ENCODE measurements at regions of chr1 and their contacts with region 1.

Region 1: GRCh38 chr1:20143734-20144565 is 4.8 kb downstream of the PLA2G2F start:
- DNase-seq: peak; percentile 19
- ATAC-seq: peak; percentile 36; the same call in 2 of the 3 replicates
- H3K4me3 ChIP-seq: peak overlapping the region in 1 of 3 experiments; percentile 6; a peak in 1 of 6 replicates
- H3K27ac ChIP-seq: no peak overlapping the region
- H3K4me1 ChIP-seq: peaks cover 13% of the 10 kb centered on the region
- H3K27me3 ChIP-seq: peaks cover 4 to 15% of the 10 kb centered on the region in 2 experiments; a peak in 3 of 5 replicates
- CTCF ChIP-seq: no peak
- EP300 ChIP-seq: no peak
- POLR2A ChIP-seq: no peak
- RAD21 ChIP-seq: no peak

Region 2: GRCh38 chr1:20100632-20101355 is 43.2 kb before region 1 on chr1:
- CTCF ChIA-PET with region 1: no interaction called
- POLR2A ChIA-PET with region 1: no interaction called
- in situ Hi-C with region 1: no loop called
- intact Hi-C with region 1: loop called (anchors 2 kb)
- DNase-seq: peak; percentile 48
- ATAC-seq: peak; percentile 94
- H3K4me3 ChIP-seq: no peak overlapping the region
- H3K27ac ChIP-seq: no peak overlapping the region
- H3K4me1 ChIP-seq: no peaks in the 10 kb centered on the region
- H3K27me3 ChIP-seq: 0 out of 5 replicates have a peak, but pooled peaks cover 0 to 4% of the 10 kb centered on the region in 2 experiments
- CTCF ChIP-seq: peak; percentile 77
- EP300 ChIP-seq: no peak
- POLR2A ChIP-seq: no peak
- RAD21 ChIP-seq: peak; percentile 71

Region 3: DNA sequence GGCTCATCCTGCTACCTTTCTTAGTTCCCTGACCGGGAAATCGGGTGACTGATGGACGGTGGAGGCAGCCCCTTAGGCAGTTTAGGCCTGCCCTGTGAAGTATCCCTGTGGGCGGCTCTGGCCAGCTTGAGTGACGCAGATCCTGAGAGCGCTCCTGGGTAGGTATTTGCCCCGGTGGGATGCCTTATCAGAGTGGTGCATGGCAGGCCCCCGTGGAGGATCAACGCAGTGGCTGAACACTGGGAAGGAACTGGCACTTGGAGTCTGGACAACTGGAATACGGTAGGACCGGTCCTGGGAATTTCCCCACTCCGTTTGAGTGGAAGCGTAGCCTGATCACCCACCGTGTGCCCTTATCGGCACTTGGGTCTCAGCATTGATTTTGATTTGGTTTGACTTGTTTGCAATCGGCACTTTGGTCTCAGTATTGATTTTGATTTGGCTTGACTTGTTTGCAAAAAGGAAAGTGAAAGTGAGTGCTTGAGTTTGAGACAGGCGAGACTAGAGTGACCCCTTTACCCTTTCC is 10.4 kb after region 1 on chr1:
- CTCF ChIA-PET with region 1: no interaction called
- POLR2A ChIA-PET with region 1: no interaction called
- in situ Hi-C with region 1: no loop called
- intact Hi-C with region 1: no loop called
- DNase-seq: no peak
- ATAC-seq: no peak
- H3K4me3 ChIP-seq: peak overlapping the region; percentile 20 to 39 (median 34); a peak in 4 of 6 replicates
- H3K27ac ChIP-seq: no peak overlapping the region
- H3K4me1 ChIP-seq: peaks cover 17% of the 10 kb centered on the region
- H3K27me3 ChIP-seq: no peaks in the 10 kb centered on the region; a peak in 1 of 5 replicates
- CTCF ChIP-seq: no peak
- EP300 ChIP-seq: no peak
- POLR2A ChIP-seq: no peak
- RAD21 ChIP-seq: no peak